Head of caudate nucleus (tissue), 42 donors: ENCODE measurements at regions of chr1 and their contacts with region 1.

Region 1: GRCh38 chr1:110963691-110964399 is at the start of gene LRIF1:
- DNase-seq: peak; percentile 95 to 100 (median 99)

Region 2: DNA sequence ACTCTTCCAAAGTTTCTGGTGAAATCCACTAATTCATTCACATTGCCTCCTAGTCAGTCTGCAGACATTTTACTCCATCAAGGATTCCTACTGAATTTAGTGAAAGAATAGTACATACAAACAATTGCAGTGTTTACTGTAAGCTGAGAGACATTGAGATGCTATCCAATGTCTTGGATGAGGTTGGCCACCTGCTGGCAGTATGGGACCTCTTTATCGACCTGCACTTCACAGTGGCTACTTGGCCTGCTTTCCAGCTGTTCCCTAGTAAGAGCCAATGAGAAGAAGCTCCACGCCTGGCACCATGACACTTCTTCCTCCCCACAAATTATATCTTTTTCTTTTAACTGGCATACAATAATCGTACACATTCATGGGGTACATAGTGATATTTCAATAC is 51.4 kb after region 1 on chr1:
- intact Hi-C with region 1: no loop called
- DNase-seq: no peak

Region 3: GRCh38 chr1:111139956-111140679 is 176.3 kb after region 1 on chr1 and contains the starts of genes CEPT1 and DRAM2:
- intact Hi-C with region 1: loop called (anchors 10 kb)
- DNase-seq: peak; percentile 89 to 99 (median 96)

Region 4: GRCh38 chr1:111489604-111490003 is 525.8 kb after region 1 on chr1:
- intact Hi-C with region 1: no loop called
- DNase-seq: peak in 5 of 42 donors; percentile 33 to 61 (median 50)